ENCODE measurements at regions of chr6 and their contacts with region 1.

Region 1: GRCh38 chr6:36885461-36886401 is at the start of gene C6orf89:
- DNase-seq: peak; percentile 93
- H3K4me3 ChIP-seq: peak within 1 kb of the TSS; percentile 53 to 70 (median 64)
- H3K27ac ChIP-seq: peak within 1 kb of the TSS; percentile 57
- H3K4me1 ChIP-seq: peaks cover 10% of the 10 kb centered on the region
- H3K27me3 ChIP-seq: no peaks in the 10 kb centered on the region
- CTCF ChIP-seq: peak; percentile 68 to 89
- total RNA-seq, gene C6orf89: 34.3 to 42.2 TPM

Region 2: DNA sequence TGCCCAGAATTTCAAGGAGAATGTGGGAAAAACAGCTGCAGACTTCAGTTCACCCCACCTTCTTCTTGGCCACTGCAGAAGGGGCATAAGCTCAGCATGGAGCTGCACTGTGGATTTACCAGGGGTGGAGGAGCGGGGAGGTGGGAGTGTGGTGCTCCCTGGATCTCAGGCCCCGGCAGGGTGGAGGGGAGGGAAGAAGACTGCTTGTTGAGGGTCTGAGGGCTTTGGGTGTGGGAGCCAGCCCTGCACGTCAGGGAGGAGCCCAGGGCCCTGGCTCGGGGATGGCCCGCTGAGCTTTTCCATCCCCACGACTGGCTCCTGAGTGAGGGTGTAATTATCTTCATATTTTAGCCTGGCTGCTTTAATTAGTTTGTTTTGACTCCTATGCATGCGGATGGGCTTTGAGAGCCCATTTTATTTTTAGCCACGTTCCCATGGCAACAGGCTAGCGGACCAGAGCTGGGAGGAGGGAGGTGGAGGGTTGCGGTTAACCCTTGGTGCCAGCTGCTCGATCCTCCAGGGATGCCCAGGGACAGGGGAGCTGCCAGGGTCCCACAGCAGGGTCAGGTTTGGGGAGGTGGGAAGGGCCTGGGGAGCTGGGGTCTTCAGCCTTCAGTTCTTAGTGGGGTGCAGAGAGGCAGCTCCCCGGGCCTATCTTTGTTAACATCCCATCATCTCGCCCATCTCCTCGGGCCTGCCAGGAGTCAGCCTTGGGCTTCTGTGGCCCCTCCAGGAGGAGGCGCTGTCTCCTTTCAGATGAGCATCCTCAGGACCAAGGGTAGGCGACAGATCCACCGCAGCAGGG is 119.9 kb before region 1 on chr6:
- CTCF ChIA-PET with region 1: no interaction called
- dilution Hi-C with region 1: no loop called
- in situ Hi-C with region 1: no loop called
- intact Hi-C with region 1: loop called (anchors 1 kb)
- DNase-seq: peak; percentile 63
- H3K4me3 ChIP-seq: no peak overlapping the region
- H3K27ac ChIP-seq: no peak overlapping the region
- H3K4me1 ChIP-seq: peaks cover 21% of the 10 kb centered on the region
- H3K27me3 ChIP-seq: no peaks in the 10 kb centered on the region
- CTCF ChIP-seq: peak; percentile 94 to 98

Region 3: GRCh38 chr6:36979347-36979742 is 93.6 kb after region 1 on chr6:
- CTCF ChIA-PET with region 1: no interaction called
- dilution Hi-C with region 1: no loop called
- in situ Hi-C with region 1: loop called in 1 of 2 experiments (anchors 10 kb)
- intact Hi-C with region 1: loop called (anchors 1 kb)
- DNase-seq: no peak
- H3K4me3 ChIP-seq: no peak overlapping the region
- H3K27ac ChIP-seq: no peak overlapping the region
- H3K4me1 ChIP-seq: peaks cover 4% of the 10 kb centered on the region
- H3K27me3 ChIP-seq: no peaks in the 10 kb centered on the region
- CTCF ChIP-seq: peak in 1 of 2 donors; percentile 34

Region 4: DNA sequence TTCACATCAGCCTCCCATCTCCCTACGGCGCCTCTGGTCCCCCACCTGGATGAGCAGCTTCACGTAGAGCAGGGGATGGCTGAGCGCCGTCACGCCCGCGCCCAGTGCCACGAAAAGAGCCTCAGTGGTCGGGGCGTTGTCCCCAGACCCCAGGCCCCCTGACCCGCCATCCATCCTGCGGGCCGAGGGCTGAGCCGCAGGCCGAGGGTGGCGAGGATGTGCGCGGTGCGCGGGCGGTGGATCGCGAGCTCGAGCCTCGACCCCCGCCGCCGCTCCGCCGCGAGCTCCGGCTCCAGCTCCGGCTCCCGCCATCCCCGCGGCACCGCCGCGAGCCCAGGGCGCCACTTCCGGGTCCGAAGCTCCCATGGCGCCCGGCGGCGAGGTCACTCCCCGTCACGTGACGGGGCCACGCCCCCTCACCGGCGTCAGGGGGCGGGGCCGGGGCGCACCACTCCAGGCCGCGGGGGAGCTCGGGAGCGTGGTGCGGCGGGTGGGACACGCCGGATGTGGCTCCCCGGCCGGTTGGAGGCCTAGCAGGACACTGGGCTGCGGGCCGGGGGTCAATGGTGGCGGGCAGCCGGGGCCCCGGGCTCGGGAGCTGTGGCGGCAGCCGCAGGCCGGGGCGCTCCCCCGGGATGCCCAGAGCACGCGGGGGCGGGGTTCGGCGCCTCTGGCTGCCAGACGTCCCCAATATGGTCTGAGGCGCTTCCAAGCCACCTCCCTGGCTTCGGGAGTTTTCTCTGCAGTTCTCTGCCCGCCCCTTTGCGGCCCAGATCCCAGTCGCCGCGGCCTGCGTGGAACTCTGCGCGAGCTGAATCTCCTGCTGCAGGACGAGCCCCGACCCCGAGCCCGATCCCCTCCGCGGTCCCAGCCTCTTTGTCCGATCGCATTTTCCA is 100.3 kb after region 1 on chr6 and contains the start of gene MTCH1:
- CTCF ChIA-PET with region 1: no interaction called
- dilution Hi-C with region 1: no loop called
- in situ Hi-C with region 1: loop called in 1 of 2 experiments (anchors 10 kb)
- intact Hi-C with region 1: no loop called
- DNase-seq: peak; percentile 87
- H3K4me3 ChIP-seq: peak within 1 kb of the TSS; percentile 80 to 97 (median 92)
- H3K27ac ChIP-seq: peak within 1 kb of the TSS; percentile 63
- H3K4me1 ChIP-seq: peaks cover 16% of the 10 kb centered on the region
- H3K27me3 ChIP-seq: no peaks in the 10 kb centered on the region
- CTCF ChIP-seq: no peak
- total RNA-seq, gene MTCH1: 102 to 110 TPM

Region 5: GRCh38 chr6:37207903-37208456 is 322.2 kb after region 1 on chr6:
- CTCF ChIA-PET with region 1: interaction called, 3 read pairs
- dilution Hi-C with region 1: no loop called
- in situ Hi-C with region 1: loop called (anchors 25 kb)
- intact Hi-C with region 1: loop called (anchors 1 kb)
- DNase-seq: peak; percentile 77
- H3K4me3 ChIP-seq: no peak overlapping the region
- H3K27ac ChIP-seq: no peak overlapping the region
- H3K4me1 ChIP-seq: peaks cover 7% of the 10 kb centered on the region
- H3K27me3 ChIP-seq: no peaks in the 10 kb centered on the region
- CTCF ChIP-seq: peak; percentile 86 to 91

Region 6: DNA sequence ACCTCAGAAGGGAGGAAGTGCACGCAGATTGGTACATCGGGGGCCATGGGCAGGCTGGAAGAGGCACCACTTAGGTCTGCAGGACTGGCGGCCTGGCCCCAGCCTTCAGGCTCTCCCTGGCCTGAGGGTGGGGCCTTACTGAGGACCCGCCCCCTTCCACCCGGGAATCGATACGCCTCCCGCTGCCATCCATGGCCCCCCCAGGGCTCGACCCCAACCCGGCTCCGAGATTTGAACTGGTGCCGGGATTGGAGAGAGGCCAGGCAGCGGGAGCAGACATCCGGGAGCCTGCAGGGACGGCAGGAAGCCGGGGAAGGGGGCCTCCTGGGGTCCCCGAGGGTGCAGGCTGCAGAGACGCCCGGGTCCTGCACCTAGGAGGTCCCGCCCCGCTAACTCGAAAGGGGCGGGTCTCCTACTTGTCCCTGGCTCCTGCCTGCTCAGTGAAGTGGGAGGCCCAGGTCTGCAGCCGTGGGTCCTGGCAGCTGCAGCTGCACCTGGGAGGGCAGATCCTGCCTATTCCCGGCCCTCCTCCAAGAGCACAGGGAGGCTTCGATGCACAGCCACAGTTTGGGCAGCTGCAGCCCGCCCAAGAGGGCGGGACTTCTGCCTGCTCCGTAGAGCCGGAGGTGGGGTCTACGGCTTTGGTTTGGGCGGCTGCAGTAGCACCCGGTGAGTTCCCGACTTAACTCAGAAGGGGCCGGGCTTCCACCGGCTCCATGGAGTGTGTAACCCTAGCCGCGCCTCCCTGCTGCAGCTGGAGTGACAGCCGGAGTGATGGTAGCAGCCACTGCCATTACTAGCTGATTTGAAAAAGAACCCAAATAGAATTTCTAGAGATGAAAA is 336.6 kb after region 1 on chr6:
- CTCF ChIA-PET with region 1: no interaction called
- dilution Hi-C with region 1: no loop called
- in situ Hi-C with region 1: loop called (anchors 25 kb)
- intact Hi-C with region 1: no loop called
- DNase-seq: peak; percentile 93
- H3K4me3 ChIP-seq: peak overlapping the region; percentile 48 to 65 (median 51)
- H3K27ac ChIP-seq: no peak overlapping the region
- H3K4me1 ChIP-seq: no peaks in the 10 kb centered on the region
- H3K27me3 ChIP-seq: no peaks in the 10 kb centered on the region
- CTCF ChIP-seq: peak in 1 of 2 donors; percentile 13